Mammary epithelial cell (primary cell): ENCODE measurements at regions of chr2 and their contacts with region 1.

Region 1: DNA sequence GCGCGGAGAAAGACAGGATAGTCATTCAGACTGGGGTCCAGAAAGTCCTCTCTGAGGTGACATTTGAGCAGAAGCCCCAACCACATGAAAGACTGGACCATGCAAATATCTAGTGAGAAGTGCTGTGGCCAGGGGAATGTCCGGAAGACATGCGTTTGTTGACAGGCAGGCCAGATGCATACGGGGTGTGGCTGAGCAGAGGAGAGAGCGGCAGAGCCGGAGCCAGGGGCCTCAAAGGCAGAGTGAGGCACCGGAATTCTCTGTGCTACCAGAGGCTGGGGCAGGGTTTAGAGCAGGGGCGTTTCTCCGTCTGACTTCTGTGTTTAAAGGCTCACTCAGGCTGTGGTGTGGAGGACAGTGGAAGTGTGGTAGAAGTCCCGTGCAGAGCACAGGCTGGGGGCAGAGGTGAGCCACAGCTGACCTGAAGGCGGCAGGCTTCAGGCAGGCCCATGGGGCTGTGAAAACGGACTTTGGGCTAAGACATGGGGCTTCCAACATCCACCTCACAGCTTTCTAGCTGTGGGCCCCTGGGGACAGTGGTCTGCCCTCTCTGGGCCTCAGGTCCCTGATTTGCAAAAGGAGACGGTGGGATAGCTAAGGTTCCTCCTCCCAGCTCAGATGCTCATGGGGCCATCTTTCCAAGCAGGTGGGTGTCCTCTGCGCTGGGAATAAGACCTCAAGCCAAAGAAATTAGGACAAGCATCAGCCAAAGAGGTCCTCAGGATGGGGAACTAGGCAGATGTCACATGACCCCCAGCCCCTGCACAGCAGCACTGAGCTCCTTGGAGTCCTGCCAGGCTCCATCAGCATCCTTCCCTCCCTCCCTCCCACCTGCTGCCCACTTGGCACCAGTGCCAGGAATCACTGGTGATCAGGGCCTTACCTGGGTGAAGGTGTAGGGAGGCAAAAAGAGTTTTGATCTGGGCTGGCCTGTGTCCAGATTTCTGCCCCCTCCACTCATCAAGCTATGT is 11.2 kb downstream of the RUFY4 start:
- DNase-seq: no peak
- H3K4me3 ChIP-seq: no peak overlapping the region
- H3K27ac ChIP-seq: no peak overlapping the region
- H3K4me1 ChIP-seq: no peaks in the 10 kb centered on the region
- H3K27me3 ChIP-seq: no peaks in the 10 kb centered on the region
- CTCF ChIP-seq: no peak

Region 2: GRCh38 chr2:218125626-218126080 is 45.4 kb after region 1 on chr2 and contains the start of gene CXCR2:
- CTCF ChIA-PET with region 1: no interaction called
- dilution Hi-C with region 1: loop called (anchors 5 kb)
- in situ Hi-C with region 1: no loop called
- intact Hi-C with region 1: no loop called
- DNase-seq: peak; percentile 24
- H3K4me3 ChIP-seq: no peak within 1 kb of the TSS
- H3K27ac ChIP-seq: no peak within 1 kb of the TSS
- H3K4me1 ChIP-seq: peaks cover 9% of the 10 kb centered on the region
- H3K27me3 ChIP-seq: no peaks in the 10 kb centered on the region
- CTCF ChIP-seq: peak; percentile 9 to 29
- total RNA-seq, gene CXCR2: 0.17 TPM in 1 of 2 donors, not detected in the other